ENCODE measurements at regions of chr6 and their contacts with region 1.

Region 1: DNA sequence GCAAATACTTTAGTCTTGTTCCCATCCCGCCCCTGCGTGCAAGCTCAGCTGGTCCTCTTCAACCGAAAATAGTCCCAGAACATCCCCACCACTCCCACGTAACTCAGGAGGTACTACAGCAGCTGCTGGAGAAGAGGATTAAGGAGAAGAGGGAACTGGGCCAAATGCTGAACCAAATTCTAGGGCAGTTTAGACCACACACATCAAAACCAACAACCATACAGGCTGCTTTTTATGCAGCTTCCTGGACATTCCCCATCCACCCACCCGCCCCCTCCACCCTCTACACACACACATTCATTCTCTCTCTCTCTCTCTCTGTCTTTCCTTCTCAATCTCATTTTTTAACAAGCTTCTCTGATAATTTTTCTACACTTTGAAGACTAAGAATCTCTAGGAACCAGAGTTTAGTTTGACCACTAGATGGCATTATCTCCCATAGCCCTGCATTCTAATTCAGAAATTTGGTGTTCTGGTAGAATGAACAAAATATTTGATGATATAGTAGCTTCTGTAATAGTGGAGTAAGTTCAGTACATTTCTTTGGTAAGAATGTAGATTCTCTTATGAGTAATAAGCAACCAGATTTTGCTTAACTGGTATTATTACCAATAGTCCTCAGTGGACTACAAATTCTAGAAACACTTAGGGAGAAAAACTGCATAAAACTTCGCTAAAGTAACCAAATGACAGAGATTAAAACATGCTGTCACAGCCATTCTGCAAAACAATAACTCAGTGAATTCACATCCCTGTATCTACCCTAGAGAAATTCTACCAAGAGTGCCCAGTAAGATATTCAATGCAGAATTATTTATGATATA is 52.1 kb upstream of the BEND6 start:
- DNase-seq: no peak
- ATAC-seq: peak; percentile 86

Region 2: GRCh38 chr6:56984361-56984760 is 81.5 kb after region 1 on chr6:
- intact Hi-C with region 1: no loop called
- DNase-seq: no peak
- ATAC-seq: no peak

Region 3: DNA sequence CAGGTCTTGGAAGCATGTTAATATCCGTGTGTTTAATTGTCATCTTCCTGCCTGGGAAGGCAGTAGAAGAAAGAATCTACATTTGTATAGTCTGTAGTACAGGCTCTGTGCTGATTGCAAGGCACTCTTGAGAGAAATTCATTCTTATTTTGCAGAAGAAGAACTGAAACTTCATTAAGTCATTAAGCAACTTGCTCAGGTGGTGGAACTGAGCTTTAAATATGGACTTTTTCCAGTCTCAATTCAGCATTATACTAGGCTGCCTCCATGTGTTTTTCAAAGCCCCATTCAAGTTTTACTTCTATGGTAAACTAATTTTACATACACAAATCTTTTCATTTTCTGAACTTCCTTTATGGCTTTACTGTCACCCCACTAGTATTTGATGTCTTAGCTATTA is 205.8 kb after region 1 on chr6:
- intact Hi-C with region 1: no loop called
- DNase-seq: no peak
- ATAC-seq: no peak

Region 4: GRCh38 chr6:57316581-57317059 is 413.8 kb after region 1 on chr6:
- intact Hi-C with region 1: loop called (anchors 10 kb)
- DNase-seq: peak; percentile 87
- ATAC-seq: peak; percentile 96